ENCODE measurements at regions of chr19 and their contacts with region 1.

Region 1: GRCh38 chr19:8321060-8321985 is at the starts of genes NDUFA7 and RPS28:
- DNase-seq: peak; percentile 99
- ATAC-seq: peak; percentile 94
- H3K4me3 Mint-ChIP-seq: peak within 1 kb of the TSS; percentile 97
- H3K27ac Mint-ChIP-seq: peak within 1 kb of the TSS; percentile 96
- H3K4me1 Mint-ChIP-seq: peaks cover 29% of the 10 kb centered on the region
- H3K27me3 Mint-ChIP-seq: no peaks in the 10 kb centered on the region
- CTCF ChIP-seq: no peak
- total RNA-seq, gene NDUFA7: 72.2 to 84.3 TPM
- total RNA-seq, gene RPS28: 2,450 to 2,492 TPM

Region 2: DNA sequence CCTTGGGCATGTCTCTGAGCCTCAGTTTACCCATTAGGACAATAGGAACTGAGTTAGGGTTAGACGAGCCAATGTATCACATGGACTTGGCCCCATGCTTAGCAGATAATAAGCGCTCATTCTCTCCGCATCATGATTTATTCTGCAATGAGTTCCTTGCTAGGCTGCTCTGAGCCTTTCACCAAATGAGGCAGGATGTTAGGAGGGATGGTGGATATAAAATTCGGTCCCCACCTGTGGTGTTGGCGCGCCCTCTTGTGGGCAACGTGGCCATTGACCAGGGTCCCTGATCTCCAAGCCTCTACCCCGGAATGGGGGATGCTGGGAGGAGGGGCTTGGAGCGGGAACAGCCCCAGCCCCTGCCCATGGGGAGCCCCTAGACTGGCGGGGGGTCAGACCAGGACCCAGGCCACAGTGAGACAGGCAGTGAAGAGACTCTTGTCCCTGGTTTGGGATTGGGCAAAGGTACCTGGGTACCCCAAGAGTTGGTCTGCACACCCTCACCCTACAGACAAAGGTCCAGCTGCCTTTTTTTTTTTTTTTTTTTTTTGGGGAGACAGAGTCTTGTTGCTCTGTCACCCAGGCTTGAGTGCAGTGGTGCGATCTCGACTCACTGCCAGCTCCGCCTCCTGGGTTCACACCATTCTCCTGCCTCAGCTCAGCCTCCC is 68.3 kb before region 1 on chr19:
- CTCF ChIA-PET with region 1: no interaction called
- POLR2A ChIA-PET with region 1: no interaction called
- intact Hi-C with region 1: no loop called
- DNase-seq: peak; percentile 89
- ATAC-seq: peak; percentile 93
- H3K4me3 Mint-ChIP-seq: no peak overlapping the region
- H3K27ac Mint-ChIP-seq: no peak overlapping the region
- H3K4me1 Mint-ChIP-seq: peaks cover 10% of the 10 kb centered on the region
- H3K27me3 Mint-ChIP-seq: no peaks in the 10 kb centered on the region
- CTCF ChIP-seq: peak; percentile 96

Region 3: DNA sequence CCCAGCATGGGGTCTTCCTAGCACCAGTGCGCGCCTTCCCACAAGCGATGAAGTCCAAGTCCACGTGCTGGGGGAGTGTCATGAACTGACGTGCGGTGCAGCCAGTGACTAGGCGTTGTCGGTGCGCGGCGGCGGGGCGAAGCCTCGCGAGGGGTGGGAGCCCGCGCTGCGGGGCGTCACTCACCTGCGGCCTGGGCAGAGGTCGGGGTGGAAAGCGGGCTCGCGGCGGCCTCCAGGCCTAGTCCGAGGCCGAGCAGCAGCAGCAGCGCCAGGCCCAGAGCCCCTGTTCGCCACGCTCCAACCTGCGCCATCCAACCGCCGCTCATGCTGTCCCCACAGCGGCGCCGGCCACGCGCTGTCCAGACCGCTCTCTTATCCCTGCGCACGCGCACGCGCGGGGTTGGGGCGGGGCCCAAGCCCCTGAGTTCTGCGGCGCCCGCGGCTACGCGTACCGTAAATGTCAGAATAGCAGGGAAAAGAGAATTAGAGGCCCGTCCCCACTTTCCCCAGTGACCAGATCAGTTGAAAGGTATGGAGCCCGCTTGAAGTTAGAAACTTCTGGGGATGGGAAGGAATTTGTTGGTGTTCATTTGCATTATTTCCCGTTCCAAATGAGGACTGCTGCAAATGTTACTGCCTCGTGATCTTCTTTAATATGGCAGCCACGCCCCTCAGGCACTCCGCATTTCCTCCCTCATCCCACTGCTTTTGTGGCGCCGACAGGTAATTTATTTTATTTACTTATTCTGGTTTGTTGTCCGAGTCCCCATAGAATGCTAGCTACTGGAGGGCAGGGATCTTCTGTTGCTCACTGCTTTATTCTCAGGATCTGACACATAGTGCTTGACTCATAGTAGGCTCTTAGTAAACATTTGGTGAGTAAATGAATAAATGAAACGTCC is 13.1 kb before region 1 on chr19 and contains the start of gene CD320:
- CTCF ChIA-PET with region 1: interaction called, 4 read pairs
- POLR2A ChIA-PET with region 1: interaction called, 20 read pairs
- intact Hi-C with region 1: no loop called
- DNase-seq: peak; percentile 90
- ATAC-seq: peak; percentile 91
- H3K4me3 Mint-ChIP-seq: peak within 1 kb of the TSS; percentile 99
- H3K27ac Mint-ChIP-seq: peak within 1 kb of the TSS; percentile 96
- H3K4me1 Mint-ChIP-seq: peaks cover 34% of the 10 kb centered on the region
- H3K27me3 Mint-ChIP-seq: no peaks in the 10 kb centered on the region
- CTCF ChIP-seq: no peak
- total RNA-seq, gene CD320: 59.0 to 62.2 TPM

Region 4: DNA sequence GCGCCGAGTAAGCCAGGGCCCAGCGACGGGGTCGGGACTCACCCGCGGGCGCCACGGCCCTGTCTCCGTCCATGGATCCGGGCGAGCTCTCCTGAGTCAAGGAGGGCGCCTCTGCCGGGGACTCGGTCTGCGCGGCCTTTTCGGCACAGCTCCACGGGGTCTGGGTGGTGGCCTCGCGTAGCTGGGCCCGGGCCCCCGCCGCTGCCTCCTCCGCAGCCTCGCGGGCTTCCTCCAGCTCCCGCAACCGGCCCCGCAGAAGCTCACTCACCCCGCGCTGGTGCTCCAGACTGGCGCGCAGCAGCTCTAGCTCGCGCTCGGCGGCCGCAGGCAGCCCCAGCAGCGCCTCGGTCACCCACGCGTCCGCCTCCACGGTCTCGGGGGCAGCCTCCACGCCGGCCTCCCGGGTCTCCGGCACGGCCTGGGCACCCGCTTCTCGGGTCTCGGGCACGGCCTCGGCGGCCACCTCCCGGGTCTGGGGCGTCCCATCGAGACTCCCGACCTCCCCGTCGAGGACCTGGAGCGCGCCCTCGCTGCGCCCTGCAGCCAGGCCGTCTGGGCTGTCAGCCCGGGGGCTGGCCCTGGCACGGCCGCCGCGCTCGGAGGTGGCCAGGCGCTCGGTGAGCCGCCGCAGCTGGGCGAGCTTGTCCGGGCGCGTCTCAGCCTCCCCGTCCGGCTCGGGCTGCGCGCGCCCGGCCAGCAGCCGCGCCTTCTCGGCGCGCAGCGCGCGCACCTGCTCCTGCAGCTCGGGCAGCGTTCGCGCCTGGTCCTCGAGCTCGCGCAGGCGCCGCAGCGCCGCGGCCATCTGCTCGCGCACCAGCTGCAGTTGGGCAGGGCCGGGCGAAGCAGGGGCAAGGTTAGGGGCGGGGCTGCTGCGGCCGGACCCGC is 13.4 kb after region 1 on chr19:
- CTCF ChIA-PET with region 1: interaction called, 10 read pairs
- POLR2A ChIA-PET with region 1: interaction called, 37 read pairs
- intact Hi-C with region 1: no loop called
- DNase-seq: peak; percentile 56
- ATAC-seq: peak; percentile 74
- H3K4me3 Mint-ChIP-seq: no peak overlapping the region
- H3K27ac Mint-ChIP-seq: no peak overlapping the region
- H3K4me1 Mint-ChIP-seq: peaks cover 9% of the 10 kb centered on the region
- H3K27me3 Mint-ChIP-seq: peaks cover 31% of the 10 kb centered on the region
- CTCF ChIP-seq: no peak

Region 5: DNA sequence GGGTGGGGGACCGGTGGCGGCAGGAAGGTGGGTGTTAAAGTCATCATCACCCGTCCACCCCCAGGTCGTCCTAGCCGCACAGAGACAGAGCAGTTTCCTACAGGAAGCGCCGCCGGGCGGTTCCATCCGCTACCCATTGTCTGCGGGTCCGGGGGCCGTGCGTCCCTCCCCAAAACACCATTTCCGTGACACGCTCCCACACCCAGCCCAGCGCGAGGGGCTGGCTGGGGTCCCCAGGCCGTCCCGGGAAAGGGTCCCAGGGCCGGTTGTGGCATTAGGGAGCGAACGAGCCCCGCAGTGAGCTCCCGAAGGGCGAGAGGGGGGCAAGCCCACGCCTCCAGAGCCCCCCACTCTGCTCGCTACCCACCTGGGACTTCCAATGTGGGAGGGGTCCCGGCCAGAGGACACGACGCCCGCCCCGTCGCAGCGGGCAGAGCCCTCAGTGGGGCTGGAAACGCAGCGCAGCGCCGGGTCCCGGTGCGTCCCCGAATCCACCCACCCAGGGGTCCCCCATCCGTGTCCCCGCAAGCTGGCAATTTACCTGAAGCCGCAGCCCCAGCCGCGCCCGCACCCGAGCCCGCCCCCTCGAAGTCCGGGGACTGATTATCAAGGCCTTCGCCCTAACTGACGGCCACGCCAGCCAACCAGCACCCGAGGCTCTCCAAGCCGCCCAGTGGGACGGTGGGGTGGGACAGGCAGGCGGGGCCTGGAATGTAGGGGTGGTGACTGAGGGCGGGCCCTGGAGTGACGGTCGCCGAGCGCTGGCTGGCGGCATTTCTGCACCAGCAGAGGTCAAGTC is 21.6 kb after region 1 on chr19 and contains the start of gene KANK3:
- CTCF ChIA-PET with region 1: no interaction called
- POLR2A ChIA-PET with region 1: interaction called, 10 read pairs
- intact Hi-C with region 1: no loop called
- DNase-seq: peak; percentile 97
- ATAC-seq: peak; percentile 100
- H3K4me3 Mint-ChIP-seq: peak within 1 kb of the TSS; percentile 72
- H3K27ac Mint-ChIP-seq: no peak within 1 kb of the TSS
- H3K4me1 Mint-ChIP-seq: peaks cover 8% of the 10 kb centered on the region
- H3K27me3 Mint-ChIP-seq: peaks cover 16% of the 10 kb centered on the region
- CTCF ChIP-seq: no peak
- total RNA-seq, gene KANK3: 3.6 TPM